H1 (cell line): ENCODE measurements at regions of chr12 and their contacts with region 1.

Region 1: DNA sequence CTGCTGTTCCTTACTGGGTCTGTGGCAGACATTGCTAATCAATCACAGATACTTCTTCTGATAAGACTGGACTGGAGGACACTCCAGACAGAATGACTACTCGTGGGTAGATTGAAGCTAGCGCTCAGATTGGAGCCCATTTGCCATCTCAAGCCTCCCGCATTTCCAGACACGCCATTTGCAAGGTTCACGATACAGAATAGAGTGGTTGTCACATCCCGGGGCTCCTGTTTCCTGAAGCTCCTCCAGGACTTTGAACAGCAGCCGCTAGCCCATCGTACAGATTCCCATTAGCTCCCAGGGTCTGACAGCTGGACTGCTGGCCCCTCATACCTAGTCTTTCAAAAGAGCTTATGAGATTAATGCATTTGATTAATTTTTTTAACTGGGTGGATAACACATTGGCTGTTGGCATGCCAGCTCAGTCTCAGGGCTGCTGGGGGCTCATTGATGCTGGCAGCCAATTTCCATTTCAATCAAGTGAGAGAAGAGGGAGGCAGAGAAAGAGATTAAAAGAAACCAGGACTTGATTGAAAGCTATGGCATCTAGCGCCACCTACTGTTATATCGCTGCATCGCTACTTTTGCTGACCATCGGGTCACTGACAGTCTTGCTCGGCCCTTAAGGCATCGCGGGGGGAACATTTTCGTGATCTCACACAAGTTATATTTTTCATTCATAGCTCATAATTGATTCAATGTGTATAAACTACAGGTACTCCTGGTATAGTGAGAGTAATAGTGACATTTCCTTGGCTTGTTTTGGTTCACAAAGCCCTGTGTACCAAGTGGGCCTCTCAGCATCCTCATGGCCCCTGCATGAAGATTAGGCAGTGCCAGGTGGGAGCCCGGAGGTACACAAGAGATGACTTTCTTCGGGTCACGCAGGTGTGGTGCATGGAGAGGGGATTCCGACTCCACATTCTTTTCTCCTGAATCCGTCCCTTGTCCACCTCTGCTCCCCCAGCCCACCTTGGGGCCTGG is 78.6 kb downstream of the CCDC60 start:
- DNase-seq: peak; percentile 49 to 91
- H3K4me3 ChIP-seq: peak overlapping the region in 1 of 4 experiments; percentile 34; a peak in 1 of 8 replicates
- H3K27ac ChIP-seq: no peak overlapping the region
- H3K4me1 ChIP-seq: peaks cover 0 to 6% (median 4%) of the 10 kb centered on the region in 4 experiments; a peak in 5 of 7 replicates
- H3K27me3 ChIP-seq: no peaks in the 10 kb centered on the region
- CTCF ChIP-seq: peak; percentile 67 to 94 (median 74)
- EP300 ChIP-seq: no peak
- POLR2A ChIP-seq: no peak
- RAD21 ChIP-seq: peak; percentile 93 to 94

Region 2: DNA sequence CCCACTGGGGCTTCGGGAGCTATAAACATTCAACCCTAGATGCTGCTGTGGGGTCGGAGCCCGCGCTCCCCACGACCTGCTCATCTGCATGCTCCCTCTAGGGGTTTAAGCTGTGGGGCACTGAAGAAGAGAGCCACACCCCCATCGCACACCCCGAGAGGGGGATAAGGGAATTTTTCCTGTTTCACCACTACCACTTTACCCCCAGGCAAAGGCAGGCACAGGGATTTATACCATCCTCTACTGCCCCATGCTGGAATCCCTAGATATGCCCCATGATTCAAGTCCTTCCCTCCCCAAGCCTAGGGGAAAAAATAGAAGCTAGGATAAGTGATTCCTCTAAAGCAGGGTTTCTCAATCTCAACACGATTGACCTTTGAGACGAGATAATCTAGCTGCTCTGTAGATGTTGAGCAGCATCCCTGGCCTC is 138.5 kb before region 1 on chr12:
- CTCF ChIA-PET with region 1: interaction called, 12 read pairs
- POLR2A ChIA-PET with region 1: no interaction called
- DNase-seq: peak; percentile 25 to 52
- H3K4me3 ChIP-seq: no peak overlapping the region
- H3K27ac ChIP-seq: no peak overlapping the region
- H3K4me1 ChIP-seq: peaks cover 4 to 14% (median 9%) of the 10 kb centered on the region in 4 experiments; a peak in 5 of 7 replicates
- H3K27me3 ChIP-seq: no peaks in the 10 kb centered on the region; a peak in 1 of 7 replicates
- CTCF ChIP-seq: peak; percentile 24 to 53 (median 48)
- EP300 ChIP-seq: no peak
- POLR2A ChIP-seq: no peak
- RAD21 ChIP-seq: peak; percentile 70 to 75

Region 3: GRCh38 chr12:119314290-119314689 is 98.8 kb before region 1 on chr12:
- CTCF ChIA-PET with region 1: interaction called, 19 read pairs
- POLR2A ChIA-PET with region 1: no interaction called
- DNase-seq: no peak
- H3K4me3 ChIP-seq: no peak overlapping the region
- H3K27ac ChIP-seq: no peak overlapping the region
- H3K4me1 ChIP-seq: no peaks in the 10 kb centered on the region; a peak in 1 of 7 replicates
- H3K27me3 ChIP-seq: no peaks in the 10 kb centered on the region
- CTCF ChIP-seq: no peak
- EP300 ChIP-seq: no peak
- POLR2A ChIP-seq: no peak
- RAD21 ChIP-seq: no peak

Region 4: GRCh38 chr12:119328111-119328510 is 85.0 kb before region 1 on chr12:
- CTCF ChIA-PET with region 1: interaction called, 70 read pairs
- POLR2A ChIA-PET with region 1: interaction called, 3 read pairs
- DNase-seq: peak in 1 of 2 experiments; percentile 77
- H3K4me3 ChIP-seq: no peak overlapping the region
- H3K27ac ChIP-seq: no peak overlapping the region
- H3K4me1 ChIP-seq: no peaks in the 10 kb centered on the region
- H3K27me3 ChIP-seq: peaks cover 0 to 3% (median 0%) of the 10 kb centered on the region in 4 experiments; a peak in 1 of 7 replicates
- CTCF ChIP-seq: peak; percentile 79 to 88 (median 79)
- EP300 ChIP-seq: no peak
- POLR2A ChIP-seq: no peak
- RAD21 ChIP-seq: peak; percentile 83 to 84

Region 5: GRCh38 chr12:119338593-119339363 is 74.3 kb before region 1 on chr12:
- CTCF ChIA-PET with region 1: interaction called, 70 read pairs
- POLR2A ChIA-PET with region 1: no interaction called
- DNase-seq: no peak
- H3K4me3 ChIP-seq: no peak overlapping the region
- H3K27ac ChIP-seq: no peak overlapping the region
- H3K4me1 ChIP-seq: peaks cover 0 to 8% (median 3%) of the 10 kb centered on the region in 4 experiments; a peak in 3 of 7 replicates
- H3K27me3 ChIP-seq: peaks cover 26 to 61% (median 57%) of the 10 kb centered on the region in 4 experiments
- CTCF ChIP-seq: no peak
- EP300 ChIP-seq: no peak
- POLR2A ChIP-seq: no peak
- RAD21 ChIP-seq: no peak

Region 6: DNA sequence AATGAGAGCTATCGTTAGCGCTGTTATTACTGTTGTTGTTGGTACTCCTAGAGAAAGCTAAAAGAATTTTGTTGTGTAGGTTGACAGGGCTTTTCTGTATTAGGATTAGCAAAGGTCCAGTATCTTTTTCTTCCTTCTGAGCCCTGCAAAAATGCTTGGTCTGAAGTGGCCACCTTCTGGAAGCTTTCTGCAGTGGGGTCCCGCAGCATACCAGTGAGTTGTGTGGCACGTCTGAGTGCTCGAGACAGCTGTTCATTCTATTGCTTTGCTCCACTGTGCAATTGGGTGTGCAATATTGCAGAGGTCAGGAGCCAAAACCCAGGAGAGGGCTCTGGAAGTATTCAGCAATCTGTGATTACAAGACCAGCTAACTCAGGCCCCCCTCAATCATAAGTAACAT is 21.4 kb before region 1 on chr12:
- CTCF ChIA-PET with region 1: interaction called, 10 read pairs
- POLR2A ChIA-PET with region 1: no interaction called
- DNase-seq: no peak
- H3K4me3 ChIP-seq: no peak overlapping the region
- H3K27ac ChIP-seq: no peak overlapping the region
- H3K4me1 ChIP-seq: peaks cover 0 to 20% (median 13%) of the 10 kb centered on the region in 4 experiments; a peak in 6 of 7 replicates
- H3K27me3 ChIP-seq: no peaks in the 10 kb centered on the region; a peak in 1 of 7 replicates
- CTCF ChIP-seq: no peak
- EP300 ChIP-seq: no peak
- POLR2A ChIP-seq: no peak
- RAD21 ChIP-seq: no peak

Region 7: DNA sequence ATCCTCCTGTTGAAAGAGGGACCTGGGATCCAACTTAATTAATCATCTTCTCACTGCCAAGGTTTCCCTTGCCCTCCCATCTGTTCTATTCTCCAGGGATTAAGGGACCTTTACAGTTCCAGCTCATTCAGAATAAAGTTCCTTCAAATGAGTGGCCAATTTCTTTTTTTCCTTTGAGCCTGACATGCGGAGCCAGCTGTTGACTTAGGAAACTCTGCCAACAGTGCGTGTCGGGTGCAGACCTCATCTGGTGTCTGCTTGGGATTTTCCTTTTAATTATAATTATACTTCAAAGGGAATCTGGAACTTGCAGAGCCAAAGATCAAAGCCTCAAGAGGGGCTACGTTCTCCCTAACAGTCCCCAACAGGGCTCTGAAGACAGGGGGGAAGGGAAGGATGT is 13.8 kb before region 1 on chr12:
- CTCF ChIA-PET with region 1: interaction called, 23 read pairs
- POLR2A ChIA-PET with region 1: interaction called, 5 read pairs
- DNase-seq: no peak
- H3K4me3 ChIP-seq: no peak overlapping the region
- H3K27ac ChIP-seq: no peak overlapping the region
- H3K4me1 ChIP-seq: no peaks in the 10 kb centered on the region
- H3K27me3 ChIP-seq: no peaks in the 10 kb centered on the region
- CTCF ChIP-seq: no peak
- EP300 ChIP-seq: no peak
- POLR2A ChIP-seq: no peak
- RAD21 ChIP-seq: no peak

Region 8: GRCh38 chr12:119673634-119674033 is 260.5 kb after region 1 on chr12:
- CTCF ChIA-PET with region 1: no interaction called
- POLR2A ChIA-PET with region 1: no interaction called
- DNase-seq: no peak
- H3K4me3 ChIP-seq: no peak overlapping the region
- H3K27ac ChIP-seq: no peak overlapping the region
- H3K4me1 ChIP-seq: peaks cover 0 to 4% (median 0%) of the 10 kb centered on the region in 4 experiments; a peak in 2 of 7 replicates
- H3K27me3 ChIP-seq: no peaks in the 10 kb centered on the region
- CTCF ChIP-seq: no peak
- EP300 ChIP-seq: no peak
- POLR2A ChIP-seq: no peak
- RAD21 ChIP-seq: no peak